Heart left ventricle (tissue), 16 donors: ENCODE measurements at regions of chrX and their contacts with region 1.

Region 1: GRCh38 chrX:154046031-154046781 is 26.5 kb upstream of the IRAK1 start:
- DNase-seq: peak; percentile 26 to 63 (median 47)
- ATAC-seq: peak; percentile 44 to 77 (median 64)
- H3K4me3 ChIP-seq: no peak overlapping the region
- H3K27ac ChIP-seq: peak overlapping the region in 11 of 12 donors; percentile 8 to 72 (median 46)
- H3K4me1 ChIP-seq: peaks cover 0 to 96% (median 50%) of the 10 kb centered on the region in 12 donors
- H3K27me3 ChIP-seq: peaks cover 0 to 39% (median 0%) of the 10 kb centered on the region in 9 donors
- CTCF ChIP-seq: peak in 4 of 12 donors; percentile 8 to 45 (median 22)
- POLR2A ChIP-seq: no peak

Region 2: GRCh38 chrX:154013614-154014360 is 32.4 kb before region 1 on chrX:
- intact Hi-C with region 1: loop called in 6 of 10 experiments (anchors 5 kb)
- DNase-seq: peak in 1 of 5 donors; percentile 65
- ATAC-seq: peak in 3 of 4 donors; percentile 47 to 75 (median 69)
- H3K4me3 ChIP-seq: no peak overlapping the region
- H3K27ac ChIP-seq: no peak overlapping the region
- H3K4me1 ChIP-seq: peaks cover 0 to 13% (median under 1%) of the 10 kb centered on the region in 12 donors
- H3K27me3 ChIP-seq: peaks cover 0 to 35% (median 0%) of the 10 kb centered on the region in 9 donors
- CTCF ChIP-seq: peak; percentile 73 to 97 (median 80)
- POLR2A ChIP-seq: no peak

Region 3: DNA sequence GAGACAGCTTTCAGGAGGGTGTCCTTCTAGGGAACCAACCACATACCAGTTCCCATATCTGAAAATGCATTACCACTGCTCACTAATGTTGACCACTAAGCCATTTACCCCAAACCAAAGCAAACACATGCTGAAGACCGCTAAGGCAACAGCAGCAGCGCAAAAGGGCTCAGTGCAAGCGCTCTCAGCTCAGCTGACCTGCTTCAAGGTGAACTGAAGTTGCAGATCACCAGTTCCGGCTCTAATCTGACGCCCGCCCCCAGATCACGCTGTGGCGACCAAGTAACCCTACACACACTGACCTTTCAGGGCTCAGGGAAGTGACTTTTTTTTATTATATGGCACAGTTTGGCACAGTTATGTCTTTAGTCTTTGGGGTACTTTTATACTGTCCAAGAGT is 45.5 kb after region 1 on chrX:
- intact Hi-C with region 1: loop called in 2 of 10 experiments (anchors 5 to 10 kb)
- DNase-seq: peak in 1 of 5 donors; percentile 11
- ATAC-seq: peak in 3 of 4 donors; percentile 28 to 60 (median 58)
- H3K4me3 ChIP-seq: no peak overlapping the region
- H3K27ac ChIP-seq: peak overlapping the region in 4 of 12 donors; percentile 13 to 60 (median 16)
- H3K4me1 ChIP-seq: peaks cover 0 to 67% (median 36%) of the 10 kb centered on the region in 12 donors
- H3K27me3 ChIP-seq: peaks cover 0 to 30% (median 0%) of the 10 kb centered on the region in 9 donors
- CTCF ChIP-seq: no peak
- POLR2A ChIP-seq: no peak

Region 4: GRCh38 chrX:154097597-154098541 is 51.7 kb after region 1 on chrX and contains the start of gene MECP2:
- intact Hi-C with region 1: loop called in 2 of 10 experiments (anchors 5 to 10 kb)
- DNase-seq: peak; percentile 91 to 94 (median 92)
- ATAC-seq: peak; percentile 82 to 95 (median 93)
- H3K4me3 ChIP-seq: peak within 1 kb of the TSS; percentile 54 to 94 (median 78)
- H3K27ac ChIP-seq: peak within 1 kb of the TSS; percentile 90 to 99 (median 96)
- H3K4me1 ChIP-seq: peaks cover 0 to 41% (median 26%) of the 10 kb centered on the region in 12 donors
- H3K27me3 ChIP-seq: peaks cover 0 to 32% (median 0%) of the 10 kb centered on the region in 9 donors
- CTCF ChIP-seq: no peak
- POLR2A ChIP-seq: no peak
- total RNA-seq, gene MECP2: 24.6 to 83.3 (median 37.1) TPM